Caco-2 (cell line): ENCODE measurements at regions of chr18 and their contacts with region 1.

Region 1: GRCh38 chr18:2111456-2111855 is 459.8 kb downstream of the METTL4 start:
- DNase-seq: no peak
- H3K4me3 ChIP-seq: no peak overlapping the region
- H3K4me3 Mint-ChIP-seq: no peak overlapping the region
- H3K27ac Mint-ChIP-seq: no peak overlapping the region
- H3K4me1 ChIP-seq: peaks cover 4% of the 10 kb centered on the region; the same call in 1 of the 2 replicates
- H3K4me1 Mint-ChIP-seq: peaks cover 7% of the 10 kb centered on the region
- H3K27me3 ChIP-seq: no peaks in the 10 kb centered on the region
- H3K27me3 Mint-ChIP-seq: no peaks in the 10 kb centered on the region
- CTCF ChIP-seq: no peak

Region 2: DNA sequence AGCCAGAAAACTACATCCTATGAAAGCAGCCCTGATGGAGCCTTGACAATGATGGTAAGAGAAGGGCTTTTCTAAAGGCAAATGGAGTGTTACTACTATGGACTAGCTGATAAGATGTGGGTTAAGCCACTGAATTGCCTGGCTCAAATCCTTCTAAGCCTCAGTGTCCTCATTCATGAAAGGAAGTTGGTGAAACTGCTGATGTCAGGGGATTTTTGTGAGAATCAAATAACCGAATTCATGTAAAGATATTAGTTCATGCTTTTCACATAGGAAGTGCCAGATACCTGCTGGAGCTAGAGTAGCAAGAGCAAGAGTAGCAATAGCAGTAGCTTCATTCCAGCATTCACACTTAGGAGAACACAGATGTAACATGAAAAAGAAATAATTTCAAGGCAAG is 42.8 kb after region 1 on chr18:
- CTCF ChIA-PET with region 1: no interaction called
- POLR2A ChIA-PET with region 1: no interaction called
- intact Hi-C with region 1: no loop called
- DNase-seq: no peak
- H3K4me3 ChIP-seq: no peak overlapping the region
- H3K4me3 Mint-ChIP-seq: no peak overlapping the region
- H3K27ac Mint-ChIP-seq: no peak overlapping the region
- H3K4me1 ChIP-seq: no peaks in the 10 kb centered on the region
- H3K4me1 Mint-ChIP-seq: no peaks in the 10 kb centered on the region
- H3K27me3 ChIP-seq: no peaks in the 10 kb centered on the region
- H3K27me3 Mint-ChIP-seq: no peaks in the 10 kb centered on the region
- CTCF ChIP-seq: no peak

Region 3: GRCh38 chr18:2173464-2173863 is 62.0 kb after region 1 on chr18:
- CTCF ChIA-PET with region 1: no interaction called
- POLR2A ChIA-PET with region 1: no interaction called
- intact Hi-C with region 1: loop called (anchors 10 kb)
- DNase-seq: no peak
- H3K4me3 ChIP-seq: no peak overlapping the region
- H3K4me3 Mint-ChIP-seq: no peak overlapping the region
- H3K27ac Mint-ChIP-seq: no peak overlapping the region
- H3K4me1 ChIP-seq: peaks cover 53% of the 10 kb centered on the region
- H3K4me1 Mint-ChIP-seq: peaks cover 40% of the 10 kb centered on the region
- H3K27me3 ChIP-seq: no peaks in the 10 kb centered on the region
- H3K27me3 Mint-ChIP-seq: no peaks in the 10 kb centered on the region
- CTCF ChIP-seq: no peak